Endothelial cell of umbilical vein (primary cell): ENCODE measurements at regions of chr1 and their contacts with region 1.

Region 1: GRCh38 chr1:109910123-109910962 is at the start of gene CSF1:
- DNase-seq: peak; percentile 77
- H3K4me3 ChIP-seq: peak within 1 kb of the TSS; percentile 36 to 91 (median 45)
- H3K27ac ChIP-seq: peak within 1 kb of the TSS; percentile 45
- H3K4me1 ChIP-seq: peaks cover 8% of the 10 kb centered on the region
- H3K27me3 ChIP-seq: peaks cover 0 to 4% of the 10 kb centered on the region in 2 experiments
- CTCF ChIP-seq: no peak
- POLR2A ChIP-seq: no peak
- total RNA-seq, gene CSF1: 22.7 and 28.9 TPM in 2 replicates

Region 2: GRCh38 chr1:109877320-109877771 is 33.0 kb before region 1 on chr1:
- CTCF ChIA-PET with region 1: interaction called, 3 read pairs
- POLR2A ChIA-PET with region 1: no interaction called
- dilution Hi-C with region 1: no loop called
- intact Hi-C with region 1: loop called (anchors 2 kb)
- DNase-seq: peak; percentile 56
- H3K4me3 ChIP-seq: no peak overlapping the region
- H3K27ac ChIP-seq: no peak overlapping the region
- H3K4me1 ChIP-seq: peaks cover 8% of the 10 kb centered on the region
- H3K27me3 ChIP-seq: peaks cover 7 to 15% of the 10 kb centered on the region in 2 experiments
- CTCF ChIP-seq: peak in 1 of 2 donors; percentile 25
- POLR2A ChIP-seq: no peak

Region 3: GRCh38 chr1:109895720-109896504 is 14.4 kb before region 1 on chr1:
- CTCF ChIA-PET with region 1: interaction called, 4 read pairs
- POLR2A ChIA-PET with region 1: interaction called, 3 read pairs
- dilution Hi-C with region 1: no loop called
- intact Hi-C with region 1: loop called (anchors 1 kb)
- DNase-seq: peak; percentile 85
- H3K4me3 ChIP-seq: no peak overlapping the region
- H3K27ac ChIP-seq: peak overlapping the region; percentile 71
- H3K4me1 ChIP-seq: peaks cover 43% of the 10 kb centered on the region
- H3K27me3 ChIP-seq: no peaks in the 10 kb centered on the region
- CTCF ChIP-seq: no peak
- POLR2A ChIP-seq: no peak

Region 4: DNA sequence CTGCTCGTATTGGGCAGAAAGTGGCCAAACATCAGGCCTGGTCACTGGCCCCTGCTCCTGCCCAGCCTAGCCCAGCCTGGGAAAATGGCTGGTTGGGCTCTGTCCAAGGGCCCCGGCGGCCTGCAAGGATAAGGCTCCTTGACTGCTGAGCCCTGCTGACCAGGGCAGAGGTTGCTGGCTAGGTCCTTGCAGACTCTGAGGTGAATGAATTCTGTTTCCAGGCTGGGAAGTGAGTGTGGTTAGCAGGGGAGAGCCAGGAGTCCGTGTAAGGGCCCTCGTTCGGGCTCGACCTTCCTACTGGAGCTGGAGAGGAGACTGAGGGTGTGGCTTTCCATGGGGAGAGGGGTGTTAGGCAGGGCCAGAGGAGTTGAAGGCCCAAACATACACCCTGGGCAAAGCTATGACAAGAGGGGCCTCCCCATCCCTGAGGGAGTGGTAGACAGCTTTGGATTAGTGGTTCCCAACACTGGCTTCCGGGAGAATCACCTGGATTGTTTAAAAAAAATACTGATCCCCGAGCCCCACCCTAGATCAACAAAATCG is 20.9 kb after region 1 on chr1:
- CTCF ChIA-PET with region 1: no interaction called
- POLR2A ChIA-PET with region 1: no interaction called
- dilution Hi-C with region 1: no loop called
- intact Hi-C with region 1: loop called (anchors 2 kb)
- DNase-seq: peak; percentile 90
- H3K4me3 ChIP-seq: no peak overlapping the region
- H3K27ac ChIP-seq: no peak overlapping the region
- H3K4me1 ChIP-seq: peaks cover 11% of the 10 kb centered on the region
- H3K27me3 ChIP-seq: no peaks in the 10 kb centered on the region
- CTCF ChIP-seq: no peak
- POLR2A ChIP-seq: no peak